HAP-1 (cell line): ENCODE measurements at regions of chr4 and their contacts with region 1.

Region 1: DNA sequence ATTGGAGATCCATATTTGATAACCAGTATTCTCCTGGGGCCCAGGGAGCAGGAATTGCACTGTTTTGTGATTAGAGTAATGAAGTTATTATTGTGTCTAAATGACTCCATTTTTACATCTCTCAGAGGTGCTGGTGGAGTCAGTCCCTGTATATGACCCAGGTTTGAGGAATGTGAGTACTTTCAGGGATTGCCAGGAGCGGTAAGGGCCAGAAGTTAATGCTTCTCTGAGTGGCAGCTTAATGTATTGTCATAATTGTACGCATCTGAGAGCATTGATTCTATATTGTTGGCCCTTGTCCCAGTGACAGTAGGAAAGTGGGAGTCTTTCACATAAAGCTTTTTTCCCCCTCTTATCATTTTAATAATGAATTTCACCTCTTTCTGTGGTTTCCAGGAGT is 146.2 kb downstream of the GATB start:
- DNase-seq: no peak
- H3K4me3 ChIP-seq: no peak overlapping the region
- H3K4me1 ChIP-seq: no peaks in the 10 kb centered on the region
- H3K27me3 ChIP-seq: no peaks in the 10 kb centered on the region

Region 2: DNA sequence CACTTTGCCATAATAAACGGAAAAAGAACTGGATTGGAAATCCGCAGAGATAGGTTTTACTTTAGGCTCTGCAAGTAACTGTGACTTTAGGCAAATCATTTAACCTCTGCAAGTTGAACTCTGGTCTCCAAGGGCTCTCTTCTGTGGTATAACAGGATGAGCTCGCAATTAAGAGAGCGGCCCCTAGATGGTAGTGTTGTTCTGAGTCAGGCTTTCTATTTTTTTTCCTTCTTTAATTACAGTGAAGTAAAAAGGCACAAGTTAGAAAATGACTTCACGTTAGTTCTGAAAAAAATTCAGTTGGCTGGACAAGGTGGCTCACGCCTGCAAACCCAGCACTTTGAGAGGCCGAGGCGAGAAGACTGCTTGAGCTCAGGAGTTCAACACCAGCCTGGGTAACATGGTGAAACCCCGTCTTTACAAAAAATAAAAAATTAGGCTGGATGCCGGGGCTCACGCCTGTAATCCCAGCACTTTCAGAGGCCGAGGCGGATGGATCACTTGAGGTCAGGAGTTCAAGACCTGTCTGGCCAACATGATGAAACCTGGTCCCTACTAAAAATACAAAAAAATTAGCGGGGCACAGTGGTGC is 497.1 kb before region 1 on chr4:
- in situ Hi-C with region 1: loop called (anchors 10 kb)
- DNase-seq: peak; percentile 77 to 79
- H3K4me3 ChIP-seq: no peak overlapping the region
- H3K4me1 ChIP-seq: peaks cover 14% of the 10 kb centered on the region
- H3K27me3 ChIP-seq: no peaks in the 10 kb centered on the region